ENCODE measurements at regions of chr9 and their contacts with region 1.

Region 1: GRCh38 chr9:12775679-12776512 is 1.1 kb downstream of the LURAP1L start:
- DNase-seq: peak; percentile 87
- H3K4me3 Mint-ChIP-seq: peak overlapping the region; percentile 99
- H3K27ac Mint-ChIP-seq: peak overlapping the region; percentile 74
- H3K4me1 Mint-ChIP-seq: peaks cover 12% of the 10 kb centered on the region
- H3K27me3 Mint-ChIP-seq: no peaks in the 10 kb centered on the region
- CTCF ChIP-seq: peak; percentile 41

Region 2: GRCh38 chr9:12494456-12494855 is 281.4 kb before region 1 on chr9:
- CTCF ChIA-PET with region 1: no interaction called
- POLR2A ChIA-PET with region 1: no interaction called
- intact Hi-C with region 1: no loop called
- DNase-seq: no peak
- H3K4me3 Mint-ChIP-seq: no peak overlapping the region
- H3K27ac Mint-ChIP-seq: no peak overlapping the region
- H3K4me1 Mint-ChIP-seq: no peaks in the 10 kb centered on the region
- H3K27me3 Mint-ChIP-seq: peaks cover 53% of the 10 kb centered on the region
- CTCF ChIP-seq: no peak

Region 3: DNA sequence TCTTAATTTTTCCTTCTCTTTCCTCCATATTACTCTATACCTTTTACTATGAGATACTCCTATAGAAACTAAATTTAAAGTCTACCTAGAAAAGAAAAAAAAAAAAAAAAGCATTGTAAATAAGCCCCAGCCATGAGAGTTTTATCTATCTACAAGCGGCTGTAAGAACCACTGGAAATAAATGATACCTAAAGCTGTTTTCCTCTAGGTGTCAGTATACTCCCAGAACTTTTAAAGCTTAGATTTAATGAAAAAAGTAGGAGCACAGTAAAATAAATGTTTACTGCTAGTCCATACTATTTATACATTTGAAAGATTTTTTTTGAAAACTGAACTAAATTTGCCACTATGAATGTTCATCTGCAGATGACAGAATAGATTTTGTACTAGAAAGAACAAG is 56.5 kb before region 1 on chr9:
- CTCF ChIA-PET with region 1: interaction called, 131 read pairs
- POLR2A ChIA-PET with region 1: interaction called, 29 read pairs
- intact Hi-C with region 1: loop called (anchors 1 kb)
- DNase-seq: peak; percentile 35
- H3K4me3 Mint-ChIP-seq: no peak overlapping the region
- H3K27ac Mint-ChIP-seq: no peak overlapping the region
- H3K4me1 Mint-ChIP-seq: peaks cover 32% of the 10 kb centered on the region
- H3K27me3 Mint-ChIP-seq: no peaks in the 10 kb centered on the region
- CTCF ChIP-seq: peak; percentile 31

Region 4: DNA sequence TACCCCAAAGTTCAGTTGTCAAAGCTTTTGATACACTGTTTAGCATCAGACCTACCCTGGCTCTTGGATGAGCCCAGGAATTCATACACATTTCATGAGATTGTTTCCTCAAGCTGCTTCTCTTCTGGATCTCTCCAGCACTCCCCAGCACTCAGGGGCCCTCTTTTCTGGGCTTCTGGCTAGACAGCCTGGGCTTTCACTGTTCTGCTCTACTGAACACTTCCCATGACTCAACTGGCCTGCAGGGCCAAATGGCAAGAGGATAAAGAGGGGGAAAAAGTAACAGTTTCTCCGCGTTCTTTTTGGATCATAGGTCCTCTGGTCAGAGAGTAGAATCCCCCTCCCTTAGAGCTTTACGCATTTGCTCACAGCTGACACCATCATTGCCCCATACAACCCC is 22.0 kb before region 1 on chr9:
- CTCF ChIA-PET with region 1: interaction called, 9 read pairs
- POLR2A ChIA-PET with region 1: interaction called, 14 read pairs
- intact Hi-C with region 1: no loop called
- DNase-seq: no peak
- H3K4me3 Mint-ChIP-seq: no peak overlapping the region
- H3K27ac Mint-ChIP-seq: no peak overlapping the region
- H3K4me1 Mint-ChIP-seq: no peaks in the 10 kb centered on the region
- H3K27me3 Mint-ChIP-seq: no peaks in the 10 kb centered on the region
- CTCF ChIP-seq: no peak

Region 5: GRCh38 chr9:12801663-12802062 is 25.8 kb after region 1 on chr9:
- CTCF ChIA-PET with region 1: interaction called, 31 read pairs
- POLR2A ChIA-PET with region 1: interaction called, 85 read pairs
- intact Hi-C with region 1: no loop called
- DNase-seq: no peak
- H3K4me3 Mint-ChIP-seq: no peak overlapping the region
- H3K27ac Mint-ChIP-seq: no peak overlapping the region
- H3K4me1 Mint-ChIP-seq: peaks cover 25% of the 10 kb centered on the region
- H3K27me3 Mint-ChIP-seq: no peaks in the 10 kb centered on the region
- CTCF ChIP-seq: no peak

Region 6: DNA sequence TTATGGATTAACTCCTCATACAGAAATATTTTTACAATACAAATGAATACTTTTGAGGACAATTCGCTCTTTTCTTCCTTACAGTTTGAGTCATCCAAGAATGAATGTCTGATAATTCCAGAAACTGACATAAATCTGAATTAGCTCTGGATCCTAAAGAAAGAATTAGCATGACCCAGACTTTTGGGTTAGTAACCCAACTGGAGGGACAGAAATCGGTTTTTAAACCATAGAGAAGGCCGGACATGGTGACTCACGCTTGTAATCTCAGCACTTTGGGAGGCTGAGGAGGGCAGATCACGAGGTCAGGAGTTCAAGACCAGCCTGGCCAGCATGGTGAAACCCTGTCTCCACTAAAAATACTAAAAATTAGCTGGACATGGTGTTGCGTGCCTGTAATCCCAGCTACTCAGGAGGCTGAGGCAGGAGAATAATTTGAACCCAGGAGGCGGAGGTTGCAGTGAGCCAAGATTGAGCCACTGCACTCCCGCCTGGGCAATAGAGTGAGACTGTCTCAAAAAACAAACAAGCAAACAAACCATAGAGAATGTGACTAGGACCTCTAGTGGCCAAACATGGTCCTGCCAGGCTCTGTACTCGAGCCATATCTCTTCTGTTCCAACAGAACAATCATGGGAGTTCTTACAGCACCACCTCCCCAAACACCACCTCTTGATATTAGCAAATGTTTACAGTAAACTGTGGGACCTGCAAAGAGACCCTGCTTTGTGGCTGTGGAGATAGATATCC is 43.7 kb after region 1 on chr9:
- CTCF ChIA-PET with region 1: interaction called, 37 read pairs
- POLR2A ChIA-PET with region 1: interaction called, 242 read pairs
- intact Hi-C with region 1: loop called (anchors 1 kb)
- DNase-seq: peak; percentile 43
- H3K4me3 Mint-ChIP-seq: no peak overlapping the region
- H3K27ac Mint-ChIP-seq: peak overlapping the region; percentile 97
- H3K4me1 Mint-ChIP-seq: peaks cover 36% of the 10 kb centered on the region
- H3K27me3 Mint-ChIP-seq: no peaks in the 10 kb centered on the region
- CTCF ChIP-seq: peak; percentile 32

Region 7: GRCh38 chr9:12878356-12878978 is 102.6 kb after region 1 on chr9:
- CTCF ChIA-PET with region 1: interaction called, 28 read pairs
- POLR2A ChIA-PET with region 1: interaction called, 42 read pairs
- intact Hi-C with region 1: no loop called
- DNase-seq: peak; percentile 64
- H3K4me3 Mint-ChIP-seq: no peak overlapping the region
- H3K27ac Mint-ChIP-seq: peak overlapping the region; percentile 62
- H3K4me1 Mint-ChIP-seq: peaks cover 34% of the 10 kb centered on the region
- H3K27me3 Mint-ChIP-seq: no peaks in the 10 kb centered on the region
- CTCF ChIP-seq: no peak

Region 8: DNA sequence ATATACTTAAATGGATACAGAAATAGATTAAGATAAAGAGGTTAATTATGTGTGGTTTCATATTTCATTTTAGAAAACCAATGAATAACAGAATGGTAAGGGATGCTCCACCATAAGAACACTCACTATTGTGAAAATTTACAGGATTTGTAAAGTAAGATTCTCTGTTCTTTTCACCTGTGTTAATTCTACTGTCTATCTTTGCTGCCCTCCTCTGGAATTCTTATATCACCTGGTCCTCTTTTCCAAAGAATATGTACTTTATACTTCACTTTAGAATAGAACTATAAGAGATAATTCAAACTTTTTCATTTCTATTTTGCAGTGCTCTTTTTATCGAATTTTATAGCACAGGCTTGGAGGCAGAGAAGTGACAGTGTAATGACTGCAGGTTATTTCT is 212.4 kb after region 1 on chr9:
- CTCF ChIA-PET with region 1: no interaction called
- POLR2A ChIA-PET with region 1: no interaction called
- intact Hi-C with region 1: loop called (anchors 5 kb)
- DNase-seq: no peak
- H3K4me3 Mint-ChIP-seq: no peak overlapping the region
- H3K27ac Mint-ChIP-seq: no peak overlapping the region
- H3K4me1 Mint-ChIP-seq: no peaks in the 10 kb centered on the region
- H3K27me3 Mint-ChIP-seq: no peaks in the 10 kb centered on the region
- CTCF ChIP-seq: peak; percentile 15

Measured in MCF 10A (cell line).